ENCODE measurements at regions of chr2 and their contacts with region 1.

Region 1: GRCh38 chr2:236871500-236872001 is 214.1 kb upstream of the COPS8 start:
- H3K4me3 Mint-ChIP-seq: no peak overlapping the region
- H3K27ac Mint-ChIP-seq: peak overlapping the region; percentile 86
- H3K4me1 Mint-ChIP-seq: peaks cover 62% of the 10 kb centered on the region
- H3K27me3 Mint-ChIP-seq: peaks cover 16% of the 10 kb centered on the region

Region 2: GRCh38 chr2:236711440-236711839 is 160.1 kb before region 1 on chr2:
- intact Hi-C with region 1: loop called (anchors 10 kb)
- H3K4me3 Mint-ChIP-seq: no peak overlapping the region
- H3K27ac Mint-ChIP-seq: peak overlapping the region; percentile 73
- H3K4me1 Mint-ChIP-seq: peaks cover 69% of the 10 kb centered on the region
- H3K27me3 Mint-ChIP-seq: peaks cover 14% of the 10 kb centered on the region

Measured in dendritic cell treated with granulocyte-macrophage colony-stimulating factor and Interleukin-4, amounts not matched to agents 40 ng/mL and 50 ng/mL, for 4 days (primary cell).